ENCODE measurements at regions of chr7 and their contacts with region 1.

Region 1: DNA sequence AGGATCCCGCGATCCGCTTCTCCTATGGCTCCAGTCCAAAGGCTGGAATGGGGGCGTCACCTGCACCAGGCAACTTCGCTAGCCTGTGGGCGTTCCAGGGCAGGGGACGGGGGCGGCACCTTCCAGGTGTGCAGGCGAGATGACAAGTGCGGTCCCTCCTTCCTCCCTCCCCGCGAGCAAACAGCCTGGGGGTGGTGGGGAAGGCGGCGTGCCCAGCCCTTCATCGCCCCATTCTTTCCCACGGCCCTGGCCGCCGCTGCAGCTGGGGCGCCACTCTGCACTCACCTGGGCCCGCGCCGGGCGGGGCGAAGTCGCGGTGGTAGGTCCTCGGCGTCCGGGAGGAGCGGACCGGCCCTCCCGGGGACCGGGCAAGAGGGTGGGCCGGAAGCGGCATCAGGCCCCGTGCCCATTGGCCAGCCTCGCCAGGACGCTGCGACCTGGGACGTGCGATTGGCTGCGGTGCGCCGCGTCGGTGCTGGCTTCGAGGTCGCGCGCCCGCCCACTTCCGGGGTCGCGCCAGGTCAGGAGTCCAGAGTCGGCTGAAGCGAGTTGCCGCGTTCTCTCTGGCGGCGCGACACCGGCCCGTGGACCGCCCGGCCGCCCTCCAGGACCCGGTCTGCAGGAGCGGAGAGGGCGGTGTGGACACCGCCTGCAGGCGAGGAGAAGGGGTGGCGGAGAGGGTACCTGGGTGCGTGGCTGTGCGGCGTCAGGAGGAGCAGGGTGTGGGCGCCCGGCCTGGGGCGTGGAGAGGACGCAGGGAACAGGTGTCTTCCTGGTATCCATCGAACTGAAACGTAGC is at the start of gene TECPR1:
- DNase-seq: peak; percentile 93
- H3K4me3 Mint-ChIP-seq: peak within 1 kb of the TSS; percentile 95
- H3K27ac Mint-ChIP-seq: peak within 1 kb of the TSS; percentile 99
- H3K4me1 Mint-ChIP-seq: peaks cover 65% of the 10 kb centered on the region
- H3K27me3 Mint-ChIP-seq: no peaks in the 10 kb centered on the region
- total RNA-seq, gene TECPR1: 63.9 to 69.4 TPM

Region 2: DNA sequence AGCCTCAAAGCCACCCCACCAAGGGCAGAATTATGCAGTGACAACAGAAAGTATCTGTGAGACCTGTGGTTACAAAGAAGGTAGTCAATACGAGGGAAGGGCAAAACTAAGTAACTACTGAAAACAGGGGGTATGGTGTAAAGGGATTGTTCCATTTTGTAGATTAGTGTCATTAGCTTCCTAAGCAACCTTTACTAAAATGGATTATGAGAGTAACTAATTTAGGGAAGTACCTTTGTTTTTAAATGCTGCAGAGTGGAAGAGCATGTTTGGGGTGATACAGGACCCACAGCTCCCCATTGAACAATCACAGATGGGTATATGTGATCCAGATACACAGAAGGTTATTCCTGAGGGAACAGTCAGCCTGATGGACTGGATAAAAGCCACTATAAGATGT is 571.4 kb before region 1 on chr7:
- CTCF ChIA-PET with region 1: no interaction called
- POLR2A ChIA-PET with region 1: no interaction called
- DNase-seq: no peak
- H3K4me3 Mint-ChIP-seq: no peak overlapping the region
- H3K27ac Mint-ChIP-seq: no peak overlapping the region
- H3K4me1 Mint-ChIP-seq: no peaks in the 10 kb centered on the region
- H3K27me3 Mint-ChIP-seq: no peaks in the 10 kb centered on the region

Region 3: DNA sequence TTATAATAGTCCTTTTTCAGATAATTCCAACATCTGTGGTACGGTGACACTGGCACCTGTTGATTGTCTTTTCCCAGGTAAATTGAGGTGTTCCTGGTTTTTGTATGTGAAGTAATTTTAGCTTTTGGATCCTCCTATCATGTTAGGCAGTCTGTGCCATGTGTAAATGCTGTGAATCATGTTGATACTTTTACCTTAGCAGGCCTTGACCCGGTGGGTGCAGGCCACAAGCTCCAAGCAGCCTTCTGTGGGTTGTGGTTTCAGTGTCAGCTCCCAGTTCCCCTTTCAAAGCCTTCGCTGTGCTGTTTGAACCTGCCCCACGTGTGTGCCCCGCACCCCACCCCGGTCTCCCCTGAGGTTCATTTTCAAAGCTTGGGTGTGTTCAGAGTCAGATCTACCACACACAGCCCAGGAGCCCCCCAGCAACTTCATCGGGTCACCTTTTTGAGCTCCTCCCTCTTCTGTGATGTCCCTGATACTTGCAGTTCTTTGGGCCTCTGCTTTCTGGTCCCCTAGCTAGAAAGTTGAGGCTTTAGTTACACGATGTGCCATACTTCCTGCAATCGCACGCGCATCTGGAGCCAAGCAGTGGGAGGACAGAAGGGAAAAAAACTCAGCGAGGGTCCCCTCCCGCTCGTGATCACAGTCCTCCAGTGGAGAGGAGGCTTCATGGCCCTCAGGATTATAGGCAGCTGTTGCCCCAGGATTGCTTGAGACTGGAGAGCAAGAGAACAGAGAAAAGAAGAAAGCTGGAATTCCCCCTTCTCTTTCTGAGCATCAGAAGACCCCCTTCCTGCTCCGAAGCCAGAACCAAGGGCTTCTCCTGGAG is 49.5 kb before region 1 on chr7:
- CTCF ChIA-PET with region 1: interaction called, 9 read pairs
- POLR2A ChIA-PET with region 1: interaction called, 33 read pairs
- DNase-seq: peak; percentile 77
- H3K4me3 Mint-ChIP-seq: peak overlapping the region; percentile 9
- H3K27ac Mint-ChIP-seq: peak overlapping the region; percentile 70
- H3K4me1 Mint-ChIP-seq: peaks cover 40% of the 10 kb centered on the region
- H3K27me3 Mint-ChIP-seq: no peaks in the 10 kb centered on the region

Region 4: DNA sequence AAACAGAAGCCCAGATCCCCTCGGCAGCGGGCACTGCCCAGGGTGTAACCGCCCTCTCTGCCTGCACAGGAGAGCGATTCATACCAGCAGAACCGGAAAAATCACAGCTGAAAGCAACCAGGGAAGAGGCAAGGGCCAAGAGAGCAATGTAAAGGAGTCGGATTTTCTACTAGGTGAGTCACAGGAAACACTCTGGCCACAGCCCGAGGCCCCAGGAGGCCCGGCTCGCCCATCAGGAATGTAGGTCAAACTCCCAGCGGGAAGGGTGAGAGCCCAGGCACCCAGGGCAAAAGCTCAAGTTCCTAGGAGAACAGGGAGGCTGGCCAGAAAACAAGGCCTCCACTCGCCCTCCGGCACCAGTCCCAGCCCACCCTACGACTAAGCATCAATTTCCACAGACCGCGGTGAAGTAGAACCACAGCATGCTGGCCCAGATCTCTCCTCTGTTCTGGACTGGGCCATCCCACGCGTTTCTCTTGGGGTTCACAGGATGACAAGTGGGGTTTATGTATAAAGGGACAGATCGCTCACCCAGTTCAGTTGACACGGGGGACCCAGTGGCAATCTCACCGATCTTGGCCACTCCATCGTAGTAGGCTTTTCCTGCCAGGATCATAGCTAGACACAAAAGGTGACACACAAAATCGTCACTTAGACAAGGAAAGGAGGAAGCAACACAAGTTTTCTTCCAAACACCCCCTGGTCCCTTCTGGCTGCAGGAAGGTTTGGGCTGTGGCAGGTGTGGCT is 102.6 kb after region 1 on chr7:
- CTCF ChIA-PET with region 1: no interaction called
- POLR2A ChIA-PET with region 1: no interaction called
- DNase-seq: no peak
- H3K4me3 Mint-ChIP-seq: no peak overlapping the region
- H3K27ac Mint-ChIP-seq: no peak overlapping the region
- H3K4me1 Mint-ChIP-seq: no peaks in the 10 kb centered on the region
- H3K27me3 Mint-ChIP-seq: no peaks in the 10 kb centered on the region

Region 5: GRCh38 chr7:98372993-98373392 is 121.0 kb after region 1 on chr7:
- CTCF ChIA-PET with region 1: no interaction called
- POLR2A ChIA-PET with region 1: no interaction called
- DNase-seq: no peak
- H3K4me3 Mint-ChIP-seq: no peak overlapping the region
- H3K27ac Mint-ChIP-seq: no peak overlapping the region
- H3K4me1 Mint-ChIP-seq: no peaks in the 10 kb centered on the region
- H3K27me3 Mint-ChIP-seq: no peaks in the 10 kb centered on the region